ENCODE measurements at regions of chr11 and their contacts with region 1.

Region 1: DNA sequence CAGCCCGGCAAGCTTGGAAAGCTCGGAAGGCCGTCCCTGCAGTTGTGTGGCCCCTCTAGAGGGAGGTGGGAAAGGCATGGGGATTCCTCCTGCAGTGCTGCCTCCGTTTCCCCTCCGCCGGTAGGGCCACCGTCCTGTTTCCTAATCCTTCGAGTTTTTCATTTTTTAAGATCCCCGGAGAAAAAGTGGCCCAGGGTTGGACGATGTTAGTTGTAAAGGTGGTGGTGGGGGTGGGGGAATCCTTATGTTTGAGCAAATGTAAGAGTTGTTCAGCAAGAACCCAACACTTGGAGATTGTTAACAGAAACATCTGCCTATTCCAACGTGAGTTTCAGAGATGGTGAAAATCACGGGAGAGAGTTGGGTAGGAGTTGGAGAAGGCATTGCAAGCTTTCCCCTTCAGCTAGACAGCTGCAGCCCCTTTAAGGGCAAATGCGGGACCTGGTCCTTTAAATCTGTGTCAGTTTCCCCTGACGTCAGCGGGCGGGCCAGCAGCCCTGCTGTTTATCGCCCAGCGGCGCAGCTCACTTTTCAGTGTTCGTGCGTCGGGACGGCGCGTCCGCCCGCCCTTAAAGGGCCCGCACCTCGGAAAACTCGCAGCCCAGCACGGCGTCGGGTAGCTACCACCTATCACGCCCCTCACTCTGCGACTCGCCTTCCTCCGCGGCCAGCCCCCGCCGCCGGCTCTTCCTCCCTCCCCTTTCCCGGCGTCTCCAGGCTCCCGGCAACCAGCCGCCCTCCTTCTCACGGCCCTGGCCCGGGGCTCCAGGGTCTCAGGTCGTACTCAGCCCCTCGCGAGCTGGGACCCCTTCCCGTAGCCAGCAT is at the start of gene SIDT2:
- DNase-seq: peak; percentile 96 to 97
- H3K4me3 ChIP-seq: peak within 1 kb of the TSS; percentile 87
- H3K4me3 Mint-ChIP-seq: peak within 1 kb of the TSS; percentile 97
- H3K27ac Mint-ChIP-seq: peak within 1 kb of the TSS; percentile 96
- H3K4me1 ChIP-seq: peaks cover 20% of the 10 kb centered on the region
- H3K4me1 Mint-ChIP-seq: peaks cover 23% of the 10 kb centered on the region
- H3K27me3 ChIP-seq: no peaks in the 10 kb centered on the region
- H3K27me3 Mint-ChIP-seq: no peaks in the 10 kb centered on the region
- CTCF ChIP-seq: no peak
- total RNA-seq, gene SIDT2: 57.2 and 61.7 TPM in 2 replicates

Region 2: GRCh38 chr11:117199061-117199915 is 20.9 kb after region 1 on chr11 and contains the start of gene TAGLN:
- CTCF ChIA-PET with region 1: interaction called, 3 read pairs
- POLR2A ChIA-PET with region 1: interaction called, 6 read pairs
- intact Hi-C with region 1: loop called (anchors 1 kb)
- DNase-seq: peak; percentile 89
- H3K4me3 ChIP-seq: peak within 1 kb of the TSS; percentile 20
- H3K4me3 Mint-ChIP-seq: peak within 1 kb of the TSS; percentile 72
- H3K27ac Mint-ChIP-seq: peak within 1 kb of the TSS; percentile 86
- H3K4me1 ChIP-seq: peaks cover 37% of the 10 kb centered on the region
- H3K4me1 Mint-ChIP-seq: peaks cover 34% of the 10 kb centered on the region
- H3K27me3 ChIP-seq: no peaks in the 10 kb centered on the region
- H3K27me3 Mint-ChIP-seq: no peaks in the 10 kb centered on the region
- CTCF ChIP-seq: no peak
- total RNA-seq, gene TAGLN: 303 and 588 TPM in 2 replicates